Posterior vena cava (tissue), 2 donors: ENCODE measurements at regions of chr4 and their contacts with region 1.

Region 1: GRCh38 chr4:78121338-78121904 is 64.3 kb downstream of the FRAS1 start:
- DNase-seq: no peak

Region 2: GRCh38 chr4:77852892-77853495 is 268.4 kb before region 1 on chr4:
- intact Hi-C with region 1: no loop called
- DNase-seq: no peak

Region 3: DNA sequence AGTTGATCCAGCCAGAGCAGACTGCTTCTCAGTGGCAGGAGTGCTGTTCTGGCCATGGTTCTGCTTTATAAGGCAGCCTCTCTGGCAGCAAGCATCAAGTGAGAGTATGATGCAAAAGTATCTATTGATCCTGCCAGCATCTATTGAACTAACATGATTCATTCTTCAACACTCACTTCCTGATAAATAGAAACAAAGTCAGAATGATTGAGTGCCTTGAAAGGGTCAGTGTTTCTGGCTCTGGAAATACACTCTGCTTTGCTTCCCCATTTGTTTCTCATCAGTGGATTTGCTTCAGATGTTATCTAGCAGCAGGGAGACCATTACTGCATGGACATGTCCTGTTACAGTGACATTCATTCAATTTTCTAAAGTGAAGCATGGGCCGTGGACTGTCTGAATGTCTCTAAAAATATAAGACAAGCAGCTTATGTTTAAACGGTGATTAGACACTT is 130.5 kb before region 1 on chr4:
- intact Hi-C with region 1: no loop called
- DNase-seq: no peak

Region 4: DNA sequence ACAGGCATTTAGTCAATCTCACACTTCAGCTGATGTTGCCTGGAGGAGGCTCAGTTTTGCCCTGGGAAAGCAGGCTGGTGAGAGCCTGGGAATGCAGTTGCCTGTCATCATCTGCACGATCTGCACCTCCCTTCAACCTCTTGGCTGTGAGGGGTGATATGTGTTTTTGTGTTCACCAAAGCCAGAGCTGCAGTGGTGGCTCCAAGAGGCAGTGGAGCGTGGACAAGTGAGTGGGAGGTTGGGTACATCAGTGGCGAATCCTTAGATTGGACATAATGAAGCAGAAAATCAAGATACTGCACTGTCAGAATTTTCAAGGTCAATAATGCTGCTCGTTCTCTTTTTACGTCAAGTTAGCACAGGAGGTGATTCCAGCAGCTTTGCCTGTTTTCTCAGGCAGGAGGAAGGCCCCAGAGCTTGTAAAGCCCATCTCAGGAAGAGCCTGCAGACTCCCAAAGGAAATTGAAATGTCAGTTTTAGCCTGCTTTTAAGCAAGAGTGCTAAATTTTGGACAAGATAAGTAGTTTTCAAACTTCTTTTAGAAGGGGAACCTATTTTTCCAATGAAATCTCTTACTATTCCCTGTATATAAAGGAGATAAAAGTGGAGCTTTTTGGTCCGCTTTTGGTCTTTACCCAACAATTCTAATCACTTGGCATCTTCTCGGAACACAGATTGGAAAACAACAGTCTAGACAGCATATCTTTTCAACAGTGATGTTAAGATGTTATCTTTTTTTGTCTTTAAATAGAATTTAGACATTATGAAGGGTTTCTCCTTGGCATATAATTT is 28.5 kb after region 1 on chr4:
- intact Hi-C with region 1: no loop called
- DNase-seq: no peak

Region 5: GRCh38 chr4:78737035-78737434 is 615.6 kb after region 1 on chr4:
- intact Hi-C with region 1: loop called in 1 of 2 experiments (anchors 5 kb)
- DNase-seq: no peak